ENCODE measurements at regions of chr3 and their contacts with region 1.

Region 1: DNA sequence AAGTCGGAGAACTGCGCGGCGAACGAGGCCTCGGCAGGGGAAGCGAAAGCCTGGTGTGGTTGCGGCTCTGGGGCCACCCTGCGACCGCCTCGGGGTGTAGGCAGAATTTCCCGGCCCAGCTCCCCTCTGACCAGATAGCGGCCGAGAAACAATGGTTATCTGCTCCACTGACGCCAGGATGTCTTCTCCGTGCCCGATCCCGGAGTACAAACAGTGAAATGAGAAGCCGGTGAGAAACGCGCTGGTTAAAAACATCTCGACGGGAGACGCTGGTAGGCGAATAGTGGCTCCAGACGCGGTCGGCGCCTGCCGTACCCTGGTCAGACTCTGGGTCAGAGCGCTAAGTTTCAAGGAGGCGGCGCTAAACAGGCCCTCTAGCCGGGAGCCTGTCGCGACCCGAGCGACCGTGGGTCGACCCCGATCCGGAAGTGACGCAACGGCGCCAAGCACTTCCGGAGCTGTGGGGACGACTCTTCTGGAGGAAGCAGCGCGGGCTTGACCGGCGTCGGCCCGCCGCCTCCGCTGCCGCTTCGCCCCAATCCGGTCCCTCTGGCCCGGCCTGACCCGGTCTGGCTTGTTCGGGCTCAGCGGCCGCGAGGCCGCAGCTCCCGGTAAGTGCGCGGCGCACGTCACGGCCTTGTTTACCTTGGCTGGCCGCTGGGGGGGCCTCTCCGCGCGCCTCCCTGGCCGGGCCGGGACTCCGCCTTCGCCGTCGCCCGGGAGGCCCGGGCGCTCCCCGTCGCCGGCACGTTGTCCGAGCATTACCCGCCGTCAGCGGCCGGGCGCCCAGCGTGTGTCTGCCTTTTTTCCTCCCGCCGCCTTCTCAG is at the start of gene ARIH2:
- DNase-seq: peak; percentile 96
- ATAC-seq: peak; percentile 98
- total RNA-seq, gene ARIH2: 149 TPM

Region 2: DNA sequence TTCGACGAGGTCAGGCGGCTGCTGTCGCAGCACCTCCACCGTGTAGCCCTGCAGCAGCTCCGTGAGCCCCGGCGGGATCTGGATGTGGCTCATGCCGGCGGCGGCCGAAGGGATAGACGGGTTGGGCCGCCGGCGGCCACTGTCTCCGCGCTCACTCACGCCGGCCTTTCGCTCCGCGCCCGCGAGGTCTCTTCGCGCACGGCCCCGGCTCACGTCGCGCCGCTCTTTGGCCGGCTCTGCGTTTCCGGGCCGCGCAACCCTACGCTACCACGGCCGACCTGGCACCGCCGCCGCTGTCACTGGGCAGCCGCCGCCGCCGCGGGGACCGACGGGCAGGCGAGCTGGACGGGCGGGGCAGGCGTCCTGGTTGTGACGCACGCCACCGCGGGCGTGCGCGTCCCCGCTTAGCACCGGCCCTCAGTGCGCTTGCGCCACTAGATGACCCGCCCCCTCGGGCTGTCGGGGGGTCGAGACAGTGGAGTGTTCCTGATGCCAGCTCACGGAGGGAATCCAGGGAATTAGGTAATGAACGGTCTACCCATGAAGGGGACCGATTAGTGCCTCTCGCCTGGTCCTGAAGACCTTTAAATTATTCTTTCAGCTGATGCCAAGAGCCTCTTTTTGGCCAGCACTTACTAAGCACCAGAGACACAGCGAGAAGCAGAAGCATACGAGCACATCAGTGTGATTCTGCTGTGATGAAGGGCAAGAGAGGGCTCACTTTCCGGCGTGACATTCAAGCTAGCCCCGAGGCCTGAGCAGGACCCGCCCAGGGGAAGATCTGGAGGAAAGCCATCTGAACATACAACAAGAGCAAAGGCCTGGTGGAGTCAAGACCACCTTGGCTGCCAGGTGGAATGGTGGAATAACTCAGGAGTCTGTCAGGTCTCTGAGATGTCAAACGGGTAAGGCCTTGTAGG is 70.8 kb before region 1 on chr3 and contains the start of gene PRKAR2A:
- intact Hi-C with region 1: no loop called
- DNase-seq: peak; percentile 96
- ATAC-seq: peak; percentile 95
- total RNA-seq, gene PRKAR2A: 57.9 TPM

Region 3: GRCh38 chr3:48898383-48899234 is 20.0 kb before region 1 on chr3 and contains the start of gene SLC25A20:
- intact Hi-C with region 1: loop called (anchors 1 kb)
- DNase-seq: peak; percentile 96
- ATAC-seq: peak; percentile 98
- total RNA-seq, gene SLC25A20: 130 TPM

Region 4: GRCh38 chr3:48952510-48953118 is 34.0 kb after region 1 on chr3:
- intact Hi-C with region 1: loop called (anchors 5 kb)
- DNase-seq: no peak
- ATAC-seq: no peak

Measured in Right ventricle myocardium inferior (tissue), 1 donor.